ENCODE measurements at regions of chr15 and their contacts with region 1.

Region 1: GRCh38 chr15:48554112-48554511 is 91.4 kb downstream of the FBN1 start:
- DNase-seq: no peak
- H3K4me3 ChIP-seq: no peak overlapping the region
- H3K4me3 Mint-ChIP-seq: no peak overlapping the region
- H3K27ac Mint-ChIP-seq: no peak overlapping the region
- H3K4me1 ChIP-seq: no peaks in the 10 kb centered on the region
- H3K4me1 Mint-ChIP-seq: no peaks in the 10 kb centered on the region
- H3K27me3 ChIP-seq: no peaks in the 10 kb centered on the region; the same call in 1 of the 2 replicates
- H3K27me3 Mint-ChIP-seq: peaks cover 22% of the 10 kb centered on the region
- CTCF ChIP-seq: no peak

Region 2: DNA sequence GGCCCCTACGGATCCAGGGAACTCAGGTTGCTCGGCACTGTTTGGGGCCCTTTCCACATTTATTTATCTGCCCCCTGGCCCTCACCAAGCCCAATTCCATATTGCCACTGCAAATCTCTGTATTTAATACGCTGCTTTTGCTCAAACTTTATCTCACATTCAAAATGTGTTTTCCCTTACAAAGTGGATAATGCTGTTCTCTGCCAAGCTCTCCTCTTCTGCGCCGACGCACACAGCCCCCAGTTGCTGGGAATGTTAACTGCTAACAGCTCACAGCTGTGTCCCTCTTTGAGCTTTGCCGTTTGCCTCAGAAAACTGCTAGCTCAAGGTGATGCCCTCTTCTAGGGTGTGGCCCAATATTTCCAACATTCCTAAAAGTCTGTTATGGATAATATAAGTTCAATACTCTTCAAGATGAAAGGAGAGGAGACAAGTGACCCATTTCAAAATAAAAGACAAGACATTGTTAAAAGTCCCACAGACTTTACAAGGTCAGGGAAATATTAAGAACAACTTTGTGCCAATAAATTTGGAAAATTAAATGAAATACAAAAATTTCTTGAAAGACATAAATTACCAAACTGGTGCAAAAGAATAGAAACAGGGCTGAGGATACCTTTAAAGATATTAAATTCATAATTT is 104.0 kb after region 1 on chr15:
- CTCF ChIA-PET with region 1: no interaction called
- POLR2A ChIA-PET with region 1: no interaction called
- intact Hi-C with region 1: no loop called
- DNase-seq: no peak
- H3K4me3 ChIP-seq: no peak overlapping the region
- H3K4me3 Mint-ChIP-seq: no peak overlapping the region
- H3K27ac Mint-ChIP-seq: no peak overlapping the region
- H3K4me1 ChIP-seq: no peaks in the 10 kb centered on the region
- H3K4me1 Mint-ChIP-seq: no peaks in the 10 kb centered on the region
- H3K27me3 ChIP-seq: no peaks in the 10 kb centered on the region
- H3K27me3 Mint-ChIP-seq: peaks cover 24% of the 10 kb centered on the region
- CTCF ChIP-seq: no peak

Region 3: DNA sequence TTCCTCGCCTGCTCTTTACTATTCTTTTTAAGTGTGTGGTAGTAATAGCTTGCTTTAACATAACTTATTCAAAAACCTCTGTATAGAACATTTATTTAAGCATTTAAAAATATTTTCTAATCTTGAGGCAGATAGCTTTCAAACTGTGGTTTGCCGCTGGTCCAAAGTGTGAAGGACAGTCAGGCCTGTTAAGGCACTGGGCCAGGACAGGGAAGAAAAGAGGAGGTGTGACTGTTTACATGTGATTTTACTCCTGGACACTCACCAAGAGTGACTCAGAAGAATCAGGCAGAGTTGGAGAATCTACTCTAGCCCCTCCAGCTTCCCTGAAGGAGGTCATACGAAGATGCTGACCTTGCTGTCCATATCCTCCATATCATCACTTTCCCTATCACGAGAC is 212.1 kb after region 1 on chr15:
- CTCF ChIA-PET with region 1: no interaction called
- POLR2A ChIA-PET with region 1: interaction called, 10 read pairs
- intact Hi-C with region 1: no loop called
- DNase-seq: no peak
- H3K4me3 ChIP-seq: no peak overlapping the region
- H3K4me3 Mint-ChIP-seq: no peak overlapping the region
- H3K27ac Mint-ChIP-seq: no peak overlapping the region
- H3K4me1 ChIP-seq: peaks cover 13% of the 10 kb centered on the region
- H3K4me1 Mint-ChIP-seq: no peaks in the 10 kb centered on the region
- H3K27me3 ChIP-seq: no peaks in the 10 kb centered on the region
- H3K27me3 Mint-ChIP-seq: no peaks in the 10 kb centered on the region
- CTCF ChIP-seq: no peak